Ascending aorta (tissue), 2 donors: ENCODE measurements at regions of chr18 and their contacts with region 1.

Region 1: GRCh38 chr18:21600526-21601410 is at the start of gene ESCO1:
- DNase-seq: peak; percentile 85 to 97
- H3K4me3 ChIP-seq: peak within 1 kb of the TSS; percentile 74 to 96
- H3K27ac ChIP-seq: peak within 1 kb of the TSS; percentile 92 to 98
- H3K4me1 ChIP-seq: peaks cover 0 to 2% of the 10 kb centered on the region in 2 donors
- H3K27me3 ChIP-seq: no peaks in the 10 kb centered on the region
- CTCF ChIP-seq: peak; percentile 98
- total RNA-seq, gene ESCO1: 3.8 TPM

Region 2: GRCh38 chr18:21452796-21453510 is 147.8 kb before region 1 on chr18:
- intact Hi-C with region 1: loop called (anchors 10 kb)
- DNase-seq: no peak
- H3K4me3 ChIP-seq: no peak overlapping the region
- H3K27ac ChIP-seq: peak overlapping the region; percentile 54 to 60
- H3K4me1 ChIP-seq: peaks cover 0 to 8% of the 10 kb centered on the region in 2 donors
- H3K27me3 ChIP-seq: no peaks in the 10 kb centered on the region
- CTCF ChIP-seq: no peak

Region 3: DNA sequence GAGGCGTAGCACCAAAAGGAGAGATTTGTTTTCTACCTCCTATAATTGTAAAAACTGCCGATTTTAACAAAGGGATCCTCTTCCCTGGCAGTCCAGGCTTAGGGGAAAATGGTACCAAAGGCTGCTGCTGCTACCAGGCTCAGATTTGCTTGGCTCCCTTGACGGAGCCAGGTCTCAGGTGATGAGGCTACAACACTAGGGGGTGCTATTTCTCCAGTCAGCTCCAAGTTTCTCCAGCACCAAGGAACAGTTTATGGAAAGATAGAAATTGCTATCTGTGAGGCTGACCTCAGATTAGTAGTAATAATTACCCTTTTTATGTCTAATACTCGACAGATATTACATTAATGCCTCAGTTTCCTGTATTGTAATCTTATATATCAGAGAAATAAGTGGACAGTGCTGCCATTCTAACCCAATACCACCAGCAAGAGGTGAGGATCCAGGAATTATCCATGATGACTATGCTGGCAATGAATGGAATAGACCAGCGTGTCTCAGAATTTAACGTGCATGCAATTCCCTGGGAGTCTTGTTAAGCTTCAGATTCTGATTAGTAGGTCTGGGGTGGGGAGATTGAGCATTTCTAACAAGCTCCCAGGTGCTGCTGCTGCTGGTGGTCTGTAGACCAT is 111.5 kb before region 1 on chr18:
- intact Hi-C with region 1: loop called (anchors 5 kb)
- DNase-seq: no peak
- H3K4me3 ChIP-seq: no peak overlapping the region
- H3K27ac ChIP-seq: no peak overlapping the region
- H3K4me1 ChIP-seq: no peaks in the 10 kb centered on the region
- H3K27me3 ChIP-seq: no peaks in the 10 kb centered on the region
- CTCF ChIP-seq: peak; percentile 40 to 71 (median 66)

Region 4: DNA sequence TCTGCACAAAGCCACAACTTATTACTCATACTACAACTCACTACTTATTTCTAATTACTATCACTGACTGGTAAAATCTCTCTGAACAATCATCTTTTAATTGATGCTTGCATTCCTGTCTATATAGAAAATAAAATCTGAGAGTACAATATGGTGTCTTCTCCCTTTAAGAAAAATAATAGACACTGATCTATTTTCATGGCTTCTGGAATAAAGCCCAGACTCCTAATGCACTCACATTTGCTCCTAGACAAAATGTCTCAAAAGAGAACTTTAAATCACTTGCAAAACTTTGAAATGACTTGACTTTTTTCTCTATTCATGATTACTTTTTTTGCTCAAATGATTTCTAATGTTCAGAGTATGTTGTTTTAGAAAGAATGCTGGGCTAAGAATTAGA is 29.0 kb before region 1 on chr18:
- intact Hi-C with region 1: loop called (anchors 2 kb)
- DNase-seq: no peak
- H3K4me3 ChIP-seq: no peak overlapping the region
- H3K27ac ChIP-seq: peak overlapping the region; percentile 54 to 59
- H3K4me1 ChIP-seq: peaks cover 6 to 10% of the 10 kb centered on the region in 2 donors
- H3K27me3 ChIP-seq: no peaks in the 10 kb centered on the region
- CTCF ChIP-seq: no peak

Region 5: GRCh38 chr18:21740724-21741510 is 140.1 kb after region 1 on chr18 and contains the start of gene MIB1:
- intact Hi-C with region 1: loop called (anchors 1 kb)
- DNase-seq: peak in 1 of 2 donors; percentile 93
- H3K4me3 ChIP-seq: peak within 1 kb of the TSS; percentile 76 to 88
- H3K27ac ChIP-seq: peak within 1 kb of the TSS; percentile 96 to 99
- H3K4me1 ChIP-seq: peaks cover 0 to 5% of the 10 kb centered on the region in 2 donors
- H3K27me3 ChIP-seq: no peaks in the 10 kb centered on the region
- CTCF ChIP-seq: no peak
- total RNA-seq, gene MIB1: 11.0 TPM